CD4-positive, alpha-beta memory T cell (primary cell): ENCODE measurements at regions of chr4 and their contacts with region 1.

Region 1: GRCh38 chr4:153471691-153472080 is 5.5 kb downstream of the TMEM131L start:
- DNase-seq: peak; percentile 61 to 83 (median 72)
- H3K4me3 ChIP-seq: peak overlapping the region; percentile 45 to 48
- H3K4me3 Mint-ChIP-seq: peak overlapping the region; percentile 84 to 99 (median 98)
- H3K27ac ChIP-seq: peak overlapping the region; percentile 76
- H3K27ac Mint-ChIP-seq: peak overlapping the region; percentile 90 to 100 (median 98)
- H3K4me1 ChIP-seq: peaks cover 57% of the 10 kb centered on the region
- H3K4me1 Mint-ChIP-seq: peaks cover 54 to 80% (median 61%) of the 10 kb centered on the region in 4 donors
- H3K27me3 ChIP-seq: no peaks in the 10 kb centered on the region
- H3K27me3 Mint-ChIP-seq: no peaks in the 10 kb centered on the region

Region 2: DNA sequence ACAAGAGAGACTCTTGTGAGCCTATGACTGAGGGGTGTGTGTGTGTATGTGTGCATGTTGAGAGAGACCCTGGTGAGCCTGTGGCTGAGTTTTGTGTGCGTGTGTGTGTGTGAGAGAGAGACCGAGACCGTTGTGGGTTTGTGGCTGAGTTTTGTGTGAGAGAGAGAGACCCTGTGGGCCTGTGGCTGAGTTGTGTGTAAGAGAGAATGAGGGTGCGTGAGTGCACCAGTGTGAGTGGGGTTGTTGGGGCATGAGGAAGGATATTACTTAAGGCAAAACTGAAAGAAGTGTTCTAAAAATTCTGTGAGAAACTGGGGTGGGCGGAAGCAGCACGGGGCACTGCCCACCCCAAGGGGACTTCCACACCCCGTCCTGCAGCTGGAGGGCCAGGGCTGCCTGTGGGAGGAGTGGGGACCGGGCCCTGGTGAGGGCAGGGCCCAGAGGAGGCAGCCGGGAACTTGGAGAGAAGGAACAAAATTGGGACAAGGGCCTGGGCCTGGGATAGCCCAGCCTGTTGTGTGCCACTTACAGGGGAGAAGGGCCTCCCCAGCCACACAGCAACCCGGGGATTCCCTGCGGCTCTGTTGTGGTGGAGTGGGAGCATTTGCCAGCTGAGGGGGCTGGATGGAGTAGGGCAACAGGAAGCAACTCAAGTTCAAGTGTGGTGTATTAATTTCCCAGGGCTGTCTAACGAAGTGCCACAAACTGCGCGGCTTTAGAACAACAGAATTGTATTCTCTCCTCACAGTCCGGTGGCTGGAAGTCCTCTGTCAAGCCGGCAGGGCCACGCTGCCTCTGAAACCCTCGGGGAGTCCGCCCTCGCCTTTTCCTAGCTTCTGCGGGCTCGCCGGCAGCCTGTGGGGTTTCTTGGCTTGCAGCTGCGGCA is 16.6 kb after region 1 on chr4:
- CTCF ChIA-PET with region 1: interaction called, 43 read pairs
- POLR2A ChIA-PET with region 1: interaction called, 546 read pairs
- intact Hi-C with region 1: loop called (anchors 1 kb)
- DNase-seq: peak; percentile 81 to 94 (median 82)
- H3K4me3 ChIP-seq: peak overlapping the region; percentile 25 to 54
- H3K4me3 Mint-ChIP-seq: peak overlapping the region; percentile 78 to 92 (median 88)
- H3K27ac ChIP-seq: peak overlapping the region; percentile 88
- H3K27ac Mint-ChIP-seq: peak overlapping the region; percentile 94 to 99 (median 96)
- H3K4me1 ChIP-seq: peaks cover 90% of the 10 kb centered on the region
- H3K4me1 Mint-ChIP-seq: peaks cover 64 to 87% (median 73%) of the 10 kb centered on the region in 4 donors
- H3K27me3 ChIP-seq: no peaks in the 10 kb centered on the region
- H3K27me3 Mint-ChIP-seq: peaks cover 0 to 2% of the 10 kb centered on the region in 2 donors